CD8-positive, alpha-beta T cell (primary cell): ENCODE measurements at regions of chr6 and their contacts with region 1.

Region 1: GRCh38 chr6:157314705-157315321 is 8.5 kb downstream of the TMEM242 start:
- DNase-seq: peak in 4 of 9 experiments; percentile 14 to 79 (median 44)
- ATAC-seq: peak; percentile 95
- H3K4me3 ChIP-seq: no peak overlapping the region
- H3K4me3 Mint-ChIP-seq: no peak overlapping the region
- H3K27ac ChIP-seq: no peak overlapping the region
- H3K27ac Mint-ChIP-seq: no peak overlapping the region
- H3K4me1 ChIP-seq: no peaks in the 10 kb centered on the region
- H3K4me1 Mint-ChIP-seq: peaks cover 3% of the 10 kb centered on the region
- H3K27me3 ChIP-seq: no peaks in the 10 kb centered on the region
- H3K27me3 Mint-ChIP-seq: no peaks in the 10 kb centered on the region
- CTCF ChIP-seq: peak; percentile 95

Region 2: GRCh38 chr6:156994215-156995076 is 320.4 kb before region 1 on chr6:
- CTCF ChIA-PET with region 1: no interaction called
- POLR2A ChIA-PET with region 1: no interaction called
- intact Hi-C with region 1: no loop called
- DNase-seq: no peak
- ATAC-seq: no peak
- H3K4me3 ChIP-seq: no peak overlapping the region
- H3K4me3 Mint-ChIP-seq: no peak overlapping the region
- H3K27ac ChIP-seq: no peak overlapping the region
- H3K27ac Mint-ChIP-seq: no peak overlapping the region
- H3K4me1 ChIP-seq: no peaks in the 10 kb centered on the region
- H3K4me1 Mint-ChIP-seq: peaks cover 53% of the 10 kb centered on the region
- H3K27me3 ChIP-seq: no peaks in the 10 kb centered on the region
- H3K27me3 Mint-ChIP-seq: no peaks in the 10 kb centered on the region
- CTCF ChIP-seq: no peak

Region 3: GRCh38 chr6:157335829-157336228 is 21.0 kb after region 1 on chr6:
- CTCF ChIA-PET with region 1: interaction called, 11 read pairs
- POLR2A ChIA-PET with region 1: interaction called, 4 read pairs
- intact Hi-C with region 1: loop called in 1 of 2 experiments (anchors 2 kb)
- DNase-seq: no peak
- ATAC-seq: no peak
- H3K4me3 ChIP-seq: no peak overlapping the region
- H3K4me3 Mint-ChIP-seq: no peak overlapping the region
- H3K27ac ChIP-seq: no peak overlapping the region
- H3K27ac Mint-ChIP-seq: no peak overlapping the region
- H3K4me1 ChIP-seq: no peaks in the 10 kb centered on the region
- H3K4me1 Mint-ChIP-seq: no peaks in the 10 kb centered on the region
- H3K27me3 ChIP-seq: no peaks in the 10 kb centered on the region
- H3K27me3 Mint-ChIP-seq: peaks cover 44% of the 10 kb centered on the region
- CTCF ChIP-seq: no peak

Region 4: GRCh38 chr6:157656437-157656997 is 341.7 kb after region 1 on chr6:
- CTCF ChIA-PET with region 1: interaction called, 10 read pairs
- POLR2A ChIA-PET with region 1: no interaction called
- intact Hi-C with region 1: no loop called
- DNase-seq: no peak
- ATAC-seq: no peak
- H3K4me3 ChIP-seq: no peak overlapping the region
- H3K4me3 Mint-ChIP-seq: no peak overlapping the region
- H3K27ac ChIP-seq: no peak overlapping the region
- H3K27ac Mint-ChIP-seq: no peak overlapping the region
- H3K4me1 ChIP-seq: no peaks in the 10 kb centered on the region
- H3K4me1 Mint-ChIP-seq: no peaks in the 10 kb centered on the region
- H3K27me3 ChIP-seq: no peaks in the 10 kb centered on the region
- H3K27me3 Mint-ChIP-seq: no peaks in the 10 kb centered on the region
- CTCF ChIP-seq: no peak

Region 5: GRCh38 chr6:157946865-157947532 is 632.2 kb after region 1 on chr6:
- CTCF ChIA-PET with region 1: no interaction called
- POLR2A ChIA-PET with region 1: no interaction called
- intact Hi-C with region 1: loop called in 1 of 2 experiments (anchors 2 kb)
- DNase-seq: peak in 4 of 9 experiments; percentile 23 to 61 (median 34)
- ATAC-seq: peak; percentile 66
- H3K4me3 ChIP-seq: no peak overlapping the region
- H3K4me3 Mint-ChIP-seq: no peak overlapping the region
- H3K27ac ChIP-seq: no peak overlapping the region
- H3K27ac Mint-ChIP-seq: peak overlapping the region; percentile 33
- H3K4me1 ChIP-seq: no peaks in the 10 kb centered on the region
- H3K4me1 Mint-ChIP-seq: peaks cover 8% of the 10 kb centered on the region
- H3K27me3 ChIP-seq: no peaks in the 10 kb centered on the region
- H3K27me3 Mint-ChIP-seq: no peaks in the 10 kb centered on the region
- CTCF ChIP-seq: peak; percentile 50

Region 6: GRCh38 chr6:158131926-158132325 is 817.1 kb after region 1 on chr6:
- CTCF ChIA-PET with region 1: no interaction called
- POLR2A ChIA-PET with region 1: no interaction called
- intact Hi-C with region 1: loop called in 1 of 2 experiments (anchors 10 kb)
- DNase-seq: peak in 2 of 9 experiments; percentile 25 to 31
- ATAC-seq: peak; percentile 38
- H3K4me3 ChIP-seq: no peak overlapping the region
- H3K4me3 Mint-ChIP-seq: no peak overlapping the region
- H3K27ac ChIP-seq: no peak overlapping the region
- H3K27ac Mint-ChIP-seq: no peak overlapping the region
- H3K4me1 ChIP-seq: no peaks in the 10 kb centered on the region
- H3K4me1 Mint-ChIP-seq: no peaks in the 10 kb centered on the region
- H3K27me3 ChIP-seq: no peaks in the 10 kb centered on the region
- H3K27me3 Mint-ChIP-seq: no peaks in the 10 kb centered on the region
- CTCF ChIP-seq: peak; percentile 22

Region 7: GRCh38 chr6:159044899-159045727 is 1730.3 kb after region 1 on chr6 and contains the start of gene TAGAP:
- CTCF ChIA-PET with region 1: no interaction called
- POLR2A ChIA-PET with region 1: no interaction called
- intact Hi-C with region 1: no loop called
- DNase-seq: peak; percentile 73 to 95 (median 82)
- ATAC-seq: peak; percentile 78
- H3K4me3 ChIP-seq: peak within 1 kb of the TSS; percentile 63 to 90
- H3K4me3 Mint-ChIP-seq: peak within 1 kb of the TSS; percentile 99
- H3K27ac ChIP-seq: peak within 1 kb of the TSS; percentile 82 to 92
- H3K27ac Mint-ChIP-seq: peak within 1 kb of the TSS; percentile 95
- H3K4me1 ChIP-seq: peaks cover 40% of the 10 kb centered on the region
- H3K4me1 Mint-ChIP-seq: peaks cover 55% of the 10 kb centered on the region
- H3K27me3 ChIP-seq: no peaks in the 10 kb centered on the region
- H3K27me3 Mint-ChIP-seq: no peaks in the 10 kb centered on the region
- CTCF ChIP-seq: no peak
- total RNA-seq, gene TAGAP: 136 to 137 TPM